CD4-positive, alpha-beta memory T cell (primary cell): ENCODE measurements at regions of chr11 and their contacts with region 1.

Region 1: DNA sequence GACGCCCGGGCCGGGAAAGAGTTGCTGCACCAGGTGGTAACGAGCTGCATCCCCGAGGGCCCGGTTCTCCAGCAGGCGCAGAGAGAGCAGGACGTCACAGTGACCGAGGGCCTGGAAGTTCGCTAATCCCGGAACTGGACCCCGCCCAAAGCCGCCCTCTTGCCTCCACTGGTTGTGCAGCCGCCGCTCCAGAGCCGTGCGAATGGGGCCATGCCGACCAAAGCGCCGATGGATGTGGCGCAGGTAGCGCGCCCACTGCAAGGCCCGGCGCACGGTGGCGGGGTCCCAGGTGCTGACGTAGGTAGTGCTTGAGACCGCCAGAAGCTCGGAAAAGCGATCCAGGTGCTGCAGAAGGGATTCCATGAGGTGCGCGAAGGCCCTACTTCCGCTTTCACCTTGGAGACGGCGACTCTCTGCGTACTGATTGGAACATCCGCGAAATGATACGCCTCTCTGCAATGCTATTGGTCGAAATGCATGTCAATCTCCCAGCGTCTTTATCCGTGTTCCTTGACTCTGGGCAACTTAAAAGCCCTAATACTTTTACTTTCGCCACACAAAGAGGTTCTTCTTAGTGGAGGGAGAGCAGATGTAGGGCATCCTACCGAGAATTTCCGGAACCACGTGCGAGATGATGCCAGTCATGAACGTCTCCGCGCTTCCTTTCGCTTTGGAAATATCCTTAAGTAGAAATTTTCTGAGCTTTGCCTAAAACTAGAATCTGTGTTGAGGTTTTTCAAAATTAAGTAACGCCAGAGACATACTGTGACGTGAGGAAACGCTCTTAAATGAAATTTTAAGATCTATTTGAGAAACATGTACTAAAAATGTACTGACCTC is at the start of gene FANCF:
- DNase-seq: peak; percentile 95 to 97 (median 97)
- H3K4me3 ChIP-seq: peak within 1 kb of the TSS; percentile 93 to 99
- H3K4me3 Mint-ChIP-seq: peak within 1 kb of the TSS; percentile 98 to 100 (median 99)
- H3K27ac ChIP-seq: peak within 1 kb of the TSS; percentile 92
- H3K27ac Mint-ChIP-seq: peak within 1 kb of the TSS; percentile 98 to 100 (median 99)
- H3K4me1 ChIP-seq: peaks cover 45% of the 10 kb centered on the region
- H3K4me1 Mint-ChIP-seq: peaks cover 29 to 48% (median 35%) of the 10 kb centered on the region in 4 donors
- H3K27me3 ChIP-seq: no peaks in the 10 kb centered on the region
- H3K27me3 Mint-ChIP-seq: no peaks in the 10 kb centered on the region
- total RNA-seq, gene FANCF: 22.2 to 23.5 TPM

Region 2: GRCh38 chr11:22829231-22830081 is 203.8 kb after region 1 on chr11 and contains the start of gene SVIP:
- CTCF ChIA-PET with region 1: interaction called, 16 read pairs
- POLR2A ChIA-PET with region 1: interaction called, 35 read pairs
- intact Hi-C with region 1: loop called (anchors 1 kb)
- DNase-seq: peak; percentile 89 to 91 (median 89)
- H3K4me3 ChIP-seq: peak within 1 kb of the TSS; percentile 33 to 81
- H3K4me3 Mint-ChIP-seq: peak within 1 kb of the TSS; percentile 93 to 99 (median 95)
- H3K27ac ChIP-seq: peak within 1 kb of the TSS; percentile 75
- H3K27ac Mint-ChIP-seq: peak within 1 kb of the TSS; percentile 94 to 97 (median 95)
- H3K4me1 ChIP-seq: peaks cover 19% of the 10 kb centered on the region
- H3K4me1 Mint-ChIP-seq: peaks cover 8 to 22% (median 12%) of the 10 kb centered on the region in 4 donors
- H3K27me3 ChIP-seq: no peaks in the 10 kb centered on the region
- H3K27me3 Mint-ChIP-seq: no peaks in the 10 kb centered on the region
- total RNA-seq, gene SVIP: 64.3 to 73.8 TPM